Activated CD4-positive, alpha-beta T cell treated with anti-CD3 and anti-CD28 coated beads, Interleukin-2, amount 10 ng/mL, durations not matched to agents 24 days and 14 days (primary cell): ENCODE measurements at regions of chr1 and their contacts with region 1.

Region 1: DNA sequence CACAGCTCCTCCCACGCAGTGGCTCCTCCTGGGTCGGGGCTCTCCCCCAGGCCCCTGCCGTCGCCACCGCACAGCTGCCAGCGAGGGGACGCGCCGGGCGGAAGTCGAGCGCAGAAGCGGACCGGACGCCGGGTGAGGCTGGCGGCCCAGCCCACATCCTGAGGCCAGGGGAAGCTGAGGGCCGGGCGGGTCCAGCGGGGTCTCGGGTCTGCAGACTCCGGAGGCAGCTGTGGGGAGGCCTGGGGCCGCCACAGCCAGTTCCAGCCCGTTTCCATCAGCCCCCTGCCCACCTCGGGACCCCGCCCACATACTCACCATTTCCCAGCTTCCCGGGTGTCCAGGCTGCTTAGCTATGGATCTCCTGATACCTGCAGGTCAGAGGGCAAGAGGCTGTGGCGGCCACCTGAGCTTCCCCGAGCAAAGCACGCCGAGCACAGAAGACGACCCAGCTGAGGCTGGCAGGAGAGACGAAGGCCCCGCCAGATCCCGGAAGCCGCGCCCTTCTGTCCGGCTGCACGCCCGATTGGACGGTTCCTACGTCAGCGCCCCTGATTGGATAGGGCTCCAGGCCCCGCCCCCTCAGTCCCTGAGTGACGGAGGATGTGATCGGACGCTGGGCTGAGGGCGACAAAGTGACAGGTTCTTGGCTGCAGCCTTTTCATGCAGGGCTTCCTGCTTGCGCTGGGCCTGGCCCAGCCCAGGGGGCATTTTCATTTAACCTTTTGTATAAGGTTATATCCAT is 38.7 kb upstream of the ZNF124 start:
- DNase-seq: peak; percentile 99
- H3K4me3 Mint-ChIP-seq: peak overlapping the region; percentile 95
- H3K27ac Mint-ChIP-seq: peak overlapping the region; percentile 94
- H3K4me1 Mint-ChIP-seq: peaks cover 33% of the 10 kb centered on the region
- H3K27me3 Mint-ChIP-seq: peaks cover 4% of the 10 kb centered on the region

Region 2: GRCh38 chr1:246923900-246924299 is 286.6 kb before region 1 on chr1:
- intact Hi-C with region 1: no loop called
- DNase-seq: no peak
- H3K4me3 Mint-ChIP-seq: no peak overlapping the region
- H3K27ac Mint-ChIP-seq: no peak overlapping the region
- H3K4me1 Mint-ChIP-seq: peaks cover 22% of the 10 kb centered on the region
- H3K27me3 Mint-ChIP-seq: no peaks in the 10 kb centered on the region

Region 3: GRCh38 chr1:247078261-247079140 is 132.0 kb before region 1 on chr1 and contains the start of gene ZNF670:
- intact Hi-C with region 1: loop called (anchors 1 kb)
- DNase-seq: peak; percentile 96
- H3K4me3 Mint-ChIP-seq: peak within 1 kb of the TSS; percentile 94
- H3K27ac Mint-ChIP-seq: peak within 1 kb of the TSS; percentile 85
- H3K4me1 Mint-ChIP-seq: peaks cover 12% of the 10 kb centered on the region
- H3K27me3 Mint-ChIP-seq: peaks cover 7% of the 10 kb centered on the region
- total RNA-seq, gene ZNF670: 2.8 TPM in 2 replicates

Region 4: DNA sequence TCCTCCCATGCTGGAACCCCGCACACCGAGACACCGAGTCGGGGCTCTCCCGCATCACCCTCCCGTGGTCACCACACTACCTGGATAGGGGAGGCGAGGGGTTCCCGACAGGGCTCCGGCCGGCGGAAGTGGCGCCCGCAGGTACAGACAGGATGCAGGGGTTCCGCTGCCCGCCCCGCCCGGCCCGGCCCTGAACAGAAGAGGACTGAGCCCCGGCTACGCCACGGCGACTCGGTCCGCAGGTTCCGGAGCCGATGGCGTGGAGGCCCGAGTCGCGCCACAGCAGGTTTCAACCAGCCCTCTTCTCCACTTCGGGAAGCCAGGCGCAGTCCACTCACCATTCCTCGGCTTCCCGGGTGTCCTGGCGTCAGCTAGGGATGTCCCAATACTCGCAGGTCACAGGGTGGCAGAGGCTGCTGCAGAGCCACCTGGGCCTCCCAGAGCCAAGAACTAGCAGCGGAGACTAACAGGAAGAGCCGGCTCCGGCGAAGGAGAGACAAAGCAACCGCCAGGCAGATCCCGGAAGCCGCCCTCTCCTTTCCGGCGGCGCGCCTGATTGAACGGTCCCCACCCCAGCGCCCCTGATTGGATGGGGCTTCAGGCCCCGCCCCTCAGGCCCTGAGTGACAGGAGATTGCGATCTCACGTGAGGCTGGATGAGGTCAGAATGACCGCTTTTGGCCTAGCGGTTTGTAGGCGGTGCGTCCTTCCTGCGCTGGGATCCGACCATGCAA is 106.5 kb before region 1 on chr1 and contains the start of gene ZNF669:
- intact Hi-C with region 1: loop called (anchors 1 kb)
- DNase-seq: peak; percentile 97
- H3K4me3 Mint-ChIP-seq: peak within 1 kb of the TSS; percentile 93
- H3K27ac Mint-ChIP-seq: peak within 1 kb of the TSS; percentile 89
- H3K4me1 Mint-ChIP-seq: peaks cover 8% of the 10 kb centered on the region
- H3K27me3 Mint-ChIP-seq: peaks cover 17% of the 10 kb centered on the region
- total RNA-seq, gene ZNF669: 6.2 and 6.7 TPM in 2 replicates

Region 5: DNA sequence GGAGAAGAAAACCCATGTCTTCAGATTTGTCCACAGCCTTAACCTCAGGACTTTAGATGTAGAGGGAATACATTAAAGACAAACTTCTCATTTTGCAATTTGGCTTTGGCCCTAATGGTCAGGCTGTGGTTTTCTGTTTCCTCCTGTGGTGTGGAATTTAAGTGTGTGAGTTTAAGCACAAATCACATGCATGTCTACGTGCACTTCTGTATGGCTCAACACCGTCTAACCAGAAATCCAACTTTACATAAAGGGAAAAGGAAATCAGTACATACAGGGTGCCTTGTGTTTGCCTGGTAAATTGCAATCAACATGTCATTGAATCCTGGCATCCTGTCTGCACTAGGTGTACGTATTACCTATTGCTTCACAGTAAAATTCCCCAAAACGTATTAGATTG is 37.6 kb before region 1 on chr1:
- intact Hi-C with region 1: loop called (anchors 2 kb)
- DNase-seq: no peak
- H3K4me3 Mint-ChIP-seq: no peak overlapping the region
- H3K27ac Mint-ChIP-seq: no peak overlapping the region
- H3K4me1 Mint-ChIP-seq: peaks cover 5% of the 10 kb centered on the region
- H3K27me3 Mint-ChIP-seq: no peaks in the 10 kb centered on the region

Region 6: GRCh38 chr1:247331172-247331991 is 120.8 kb after region 1 on chr1 and contains the start of gene ZNF496:
- intact Hi-C with region 1: loop called (anchors 5 kb)
- DNase-seq: peak; percentile 92
- H3K4me3 Mint-ChIP-seq: peak within 1 kb of the TSS; percentile 92
- H3K27ac Mint-ChIP-seq: peak within 1 kb of the TSS; percentile 88
- H3K4me1 Mint-ChIP-seq: peaks cover 16% of the 10 kb centered on the region
- H3K27me3 Mint-ChIP-seq: peaks cover 2% of the 10 kb centered on the region
- total RNA-seq, gene ZNF496: 14.2 and 15.7 TPM in 2 replicates

Region 7: GRCh38 chr1:248825909-248826760 is 1615.6 kb after region 1 on chr1 and contains the start of gene SH3BP5L:
- intact Hi-C with region 1: loop called (anchors 5 kb)
- DNase-seq: peak; percentile 97
- H3K4me3 Mint-ChIP-seq: peak within 1 kb of the TSS; percentile 93
- H3K27ac Mint-ChIP-seq: peak within 1 kb of the TSS; percentile 100
- H3K4me1 Mint-ChIP-seq: peaks cover 45% of the 10 kb centered on the region
- H3K27me3 Mint-ChIP-seq: peaks cover 5% of the 10 kb centered on the region
- total RNA-seq, gene SH3BP5L: 27.5 and 28.2 TPM in 2 replicates